Activated CD8-positive, alpha-beta T cell treated with anti-CD3 and anti-CD28 coated beads for 36 hours (primary cell): ENCODE measurements at regions of chr16 and their contacts with region 1.

Region 1: GRCh38 chr16:80526425-80527061 is 14.2 kb upstream of the DYNLRB2 start:
- DNase-seq: peak; percentile 70
- ATAC-seq: peak; percentile 76
- H3K4me3 Mint-ChIP-seq: no peak overlapping the region
- H3K27ac Mint-ChIP-seq: no peak overlapping the region
- H3K4me1 Mint-ChIP-seq: peaks cover 2% of the 10 kb centered on the region
- H3K27me3 Mint-ChIP-seq: no peaks in the 10 kb centered on the region
- CTCF ChIP-seq: peak; percentile 72

Region 2: GRCh38 chr16:80540516-80541272 is 14.2 kb after region 1 on chr16 and contains the start of gene DYNLRB2:
- CTCF ChIA-PET with region 1: interaction called, 36 read pairs
- POLR2A ChIA-PET with region 1: interaction called, 4 read pairs
- intact Hi-C with region 1: no loop called
- DNase-seq: peak; percentile 92
- ATAC-seq: peak; percentile 95
- H3K4me3 Mint-ChIP-seq: peak within 1 kb of the TSS; percentile 96
- H3K27ac Mint-ChIP-seq: peak within 1 kb of the TSS; percentile 98
- H3K4me1 Mint-ChIP-seq: peaks cover 15% of the 10 kb centered on the region
- H3K27me3 Mint-ChIP-seq: peaks cover 1% of the 10 kb centered on the region
- CTCF ChIP-seq: no peak
- total RNA-seq, gene DYNLRB2: not detected

Region 3: GRCh38 chr16:80585764-80586163 is 59.2 kb after region 1 on chr16:
- CTCF ChIA-PET with region 1: interaction called, 16 read pairs
- POLR2A ChIA-PET with region 1: no interaction called
- intact Hi-C with region 1: no loop called
- DNase-seq: peak; percentile 30
- ATAC-seq: peak; percentile 70
- H3K4me3 Mint-ChIP-seq: no peak overlapping the region
- H3K27ac Mint-ChIP-seq: peak overlapping the region; percentile 46
- H3K4me1 Mint-ChIP-seq: peaks cover 49% of the 10 kb centered on the region
- H3K27me3 Mint-ChIP-seq: peaks cover 7% of the 10 kb centered on the region
- CTCF ChIP-seq: no peak

Region 4: DNA sequence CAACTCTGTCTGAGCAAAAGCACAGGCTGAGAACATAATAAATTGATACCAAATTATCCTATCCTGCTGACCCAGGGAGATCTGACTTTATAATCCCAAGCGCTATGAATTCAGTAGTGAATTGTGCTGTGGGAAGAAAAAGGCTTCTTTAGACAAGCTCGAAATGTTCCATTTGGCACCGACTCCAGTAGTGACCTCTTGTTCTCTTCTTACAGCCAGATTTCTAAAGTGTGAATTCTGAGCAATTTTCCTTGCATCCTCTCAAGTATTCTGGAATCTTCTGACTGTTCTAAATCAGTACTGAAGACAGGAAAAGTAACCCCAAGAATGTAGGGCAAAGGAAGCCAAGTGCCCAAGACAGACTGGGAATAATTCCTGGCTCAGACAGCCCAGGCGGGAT is 219.7 kb after region 1 on chr16:
- CTCF ChIA-PET with region 1: no interaction called
- POLR2A ChIA-PET with region 1: no interaction called
- intact Hi-C with region 1: no loop called
- DNase-seq: no peak
- ATAC-seq: no peak
- H3K4me3 Mint-ChIP-seq: no peak overlapping the region
- H3K27ac Mint-ChIP-seq: no peak overlapping the region
- H3K4me1 Mint-ChIP-seq: peaks cover 25% of the 10 kb centered on the region
- H3K27me3 Mint-ChIP-seq: no peaks in the 10 kb centered on the region
- CTCF ChIP-seq: no peak

Region 5: DNA sequence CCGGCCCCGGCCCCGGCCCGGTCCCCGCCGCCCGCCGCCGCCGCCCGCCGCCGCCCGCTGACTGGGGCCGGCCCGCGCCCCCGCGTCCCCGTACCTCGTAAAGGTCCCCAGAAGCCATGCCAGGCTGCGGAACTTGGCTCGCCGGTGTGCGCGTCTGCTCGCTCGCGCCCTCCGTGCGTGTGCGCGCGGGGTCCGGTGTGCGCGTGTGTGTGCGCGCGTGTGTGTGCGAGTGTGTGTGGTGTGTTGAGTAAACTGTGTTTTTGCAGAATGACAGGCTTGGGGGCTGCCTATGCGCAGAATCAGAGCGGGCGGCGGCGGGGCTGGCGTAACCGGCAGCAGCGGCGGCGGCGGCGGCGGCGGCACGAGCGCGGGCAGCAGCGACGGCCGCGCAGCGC is 277.5 kb after region 1 on chr16:
- CTCF ChIA-PET with region 1: interaction called, 13 read pairs
- POLR2A ChIA-PET with region 1: no interaction called
- intact Hi-C with region 1: no loop called
- DNase-seq: peak; percentile 70
- ATAC-seq: peak; percentile 46
- H3K4me3 Mint-ChIP-seq: peak overlapping the region; percentile 89
- H3K27ac Mint-ChIP-seq: peak overlapping the region; percentile 87
- H3K4me1 Mint-ChIP-seq: peaks cover 36% of the 10 kb centered on the region
- H3K27me3 Mint-ChIP-seq: peaks cover 16% of the 10 kb centered on the region
- CTCF ChIP-seq: no peak

Region 6: GRCh38 chr16:80824718-80825364 is 298.3 kb after region 1 on chr16:
- CTCF ChIA-PET with region 1: interaction called, 72 read pairs
- POLR2A ChIA-PET with region 1: no interaction called
- intact Hi-C with region 1: loop called (anchors 1 kb)
- DNase-seq: peak; percentile 68
- ATAC-seq: peak; percentile 53
- H3K4me3 Mint-ChIP-seq: no peak overlapping the region
- H3K27ac Mint-ChIP-seq: no peak overlapping the region
- H3K4me1 Mint-ChIP-seq: no peaks in the 10 kb centered on the region
- H3K27me3 Mint-ChIP-seq: peaks cover 3% of the 10 kb centered on the region
- CTCF ChIP-seq: peak; percentile 86